Transverse colon (tissue), 4 donors: ENCODE measurements at regions of chr18 and their contacts with region 1.

Region 1: GRCh38 chr18:76380791-76381405 is 114.1 kb downstream of the ZNF516 start:
- DNase-seq: no peak
- H3K4me3 ChIP-seq: no peak overlapping the region
- H3K27ac ChIP-seq: no peak overlapping the region
- H3K4me1 ChIP-seq: peaks cover 0 to 3% (median 0%) of the 10 kb centered on the region in 4 donors
- H3K27me3 ChIP-seq: no peaks in the 10 kb centered on the region
- CTCF ChIP-seq: peak in 2 of 5 experiments; percentile 19 to 21
- EP300 ChIP-seq: no peak
- POLR2A ChIP-seq: no peak

Region 2: GRCh38 chr18:76697441-76697901 is 316.6 kb after region 1 on chr18:
- in situ Hi-C with region 1: loop called in 1 of 4 experiments (anchors 10 kb)
- intact Hi-C with region 1: no loop called
- DNase-seq: peak; percentile 26
- H3K4me3 ChIP-seq: peak overlapping the region in 2 of 4 donors; percentile 8 to 16
- H3K27ac ChIP-seq: no peak overlapping the region
- H3K4me1 ChIP-seq: peaks cover 4 to 9% (median 7%) of the 10 kb centered on the region in 4 donors
- H3K27me3 ChIP-seq: peaks cover 16% of the 10 kb centered on the region
- CTCF ChIP-seq: no peak
- EP300 ChIP-seq: no peak
- POLR2A ChIP-seq: no peak